Esophagus muscularis mucosa (tissue), 4 donors: ENCODE measurements at regions of chr4 and their contacts with region 1.

Region 1: DNA sequence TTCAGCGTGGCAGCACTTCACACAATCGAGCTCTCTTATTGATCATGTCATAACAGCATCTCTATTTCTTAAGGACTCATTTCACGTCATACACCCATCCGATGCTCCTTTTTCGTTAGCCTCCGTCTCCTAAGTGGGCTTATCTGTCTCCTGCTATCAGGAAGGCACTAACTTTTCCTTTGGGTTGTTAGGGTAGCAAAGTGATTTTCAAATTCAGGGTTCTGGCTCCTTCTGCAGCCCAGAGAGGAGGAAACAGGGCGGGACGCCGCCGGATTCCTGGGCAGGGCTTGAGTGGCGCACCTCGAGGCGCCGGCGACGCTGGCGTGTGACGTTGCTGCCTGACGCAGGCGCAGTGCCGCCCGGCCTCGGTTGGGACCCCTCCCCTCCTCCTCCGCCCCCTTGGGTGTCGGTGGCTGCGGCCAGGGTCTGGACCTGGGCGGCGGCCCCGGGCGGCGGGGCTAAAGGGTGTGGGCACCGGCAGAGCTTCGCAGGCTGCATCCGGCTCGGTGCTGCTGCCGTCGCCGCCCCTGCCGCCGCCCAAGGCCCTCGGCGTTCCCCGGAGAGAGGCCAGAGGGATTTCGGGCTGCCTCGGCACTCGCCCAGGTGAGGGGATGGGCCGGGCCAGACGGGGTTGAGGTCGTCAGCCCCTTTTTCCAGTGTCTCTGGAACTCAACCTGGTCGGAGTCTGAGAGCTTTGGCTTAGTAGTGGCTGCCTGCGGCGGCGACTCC is at the start of gene BLTP1:
- DNase-seq: peak; percentile 95
- H3K4me3 ChIP-seq: peak within 1 kb of the TSS; percentile 88 to 97 (median 96)
- H3K27ac ChIP-seq: peak within 1 kb of the TSS; percentile 94 to 96 (median 96)
- H3K4me1 ChIP-seq: peaks cover 11 to 29% (median 23%) of the 10 kb centered on the region in 4 donors
- H3K27me3 ChIP-seq: no peaks in the 10 kb centered on the region
- CTCF ChIP-seq: no peak
- EP300 ChIP-seq: no peak
- POLR2A ChIP-seq: no peak
- total RNA-seq, gene BLTP1: 79.6 to 103 (median 82.4) TPM

Region 2: GRCh38 chr4:121789960-121790829 is 362.0 kb before region 1 on chr4:
- intact Hi-C with region 1: loop called (anchors 10 kb)
- DNase-seq: no peak
- H3K4me3 ChIP-seq: no peak overlapping the region
- H3K27ac ChIP-seq: no peak overlapping the region
- H3K4me1 ChIP-seq: no peaks in the 10 kb centered on the region
- H3K27me3 ChIP-seq: peaks cover 0 to 21% (median 0%) of the 10 kb centered on the region in 4 donors
- CTCF ChIP-seq: no peak
- EP300 ChIP-seq: no peak
- POLR2A ChIP-seq: no peak

Region 3: DNA sequence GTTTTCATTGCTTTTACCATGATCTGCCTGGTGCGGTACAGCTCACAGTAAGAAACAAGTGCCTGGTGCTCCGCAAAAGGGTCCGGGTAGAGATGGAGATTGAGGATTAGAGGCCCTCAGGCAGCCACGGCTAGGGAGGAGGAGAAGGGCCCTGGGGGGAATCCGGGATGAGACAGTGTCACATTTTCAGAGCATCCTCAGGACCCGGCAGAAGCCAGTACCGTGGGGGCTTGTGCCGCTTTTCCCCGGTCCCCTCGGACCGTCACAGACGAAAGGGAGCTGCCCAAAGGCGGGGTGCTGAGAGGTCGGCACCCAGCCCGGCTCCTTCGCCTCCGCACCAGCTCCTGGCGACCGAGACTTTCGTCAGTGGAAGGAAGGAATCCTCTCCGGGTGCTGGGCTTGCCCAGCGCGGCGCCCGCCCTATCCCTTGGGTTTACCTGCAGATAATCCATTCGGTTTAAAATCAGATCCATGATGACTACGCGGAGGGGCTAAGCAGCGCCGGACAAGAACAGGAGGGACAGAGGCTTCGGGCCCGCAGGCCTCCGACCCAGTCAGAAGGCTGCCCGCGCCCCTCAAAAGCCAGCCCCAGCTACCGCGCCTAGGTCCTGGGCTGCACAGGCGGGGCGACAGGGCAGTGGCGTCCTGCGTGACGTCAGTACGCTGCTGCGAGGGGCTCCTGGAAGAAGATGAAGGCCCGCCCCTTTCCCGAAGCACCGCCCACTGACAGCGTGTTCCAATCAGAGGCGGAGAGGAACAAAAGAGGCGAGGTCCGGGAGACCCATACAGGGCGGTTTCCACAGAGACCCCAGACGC is 282.1 kb before region 1 on chr4 and contains the start of gene BBS7:
- intact Hi-C with region 1: loop called (anchors 10 kb)
- DNase-seq: peak; percentile 100
- H3K4me3 ChIP-seq: peak within 1 kb of the TSS; percentile 81 to 92 (median 88)
- H3K27ac ChIP-seq: peak within 1 kb of the TSS; percentile 92 to 96 (median 94)
- H3K4me1 ChIP-seq: peaks cover 0 to 18% (median 13%) of the 10 kb centered on the region in 4 donors
- H3K27me3 ChIP-seq: no peaks in the 10 kb centered on the region
- CTCF ChIP-seq: no peak
- EP300 ChIP-seq: no peak
- POLR2A ChIP-seq: peak; percentile 57
- total RNA-seq, gene BBS7: 14.3 to 17.9 (median 15.2) TPM